ENCODE measurements at regions of chr13 and their contacts with region 1.

Region 1: DNA sequence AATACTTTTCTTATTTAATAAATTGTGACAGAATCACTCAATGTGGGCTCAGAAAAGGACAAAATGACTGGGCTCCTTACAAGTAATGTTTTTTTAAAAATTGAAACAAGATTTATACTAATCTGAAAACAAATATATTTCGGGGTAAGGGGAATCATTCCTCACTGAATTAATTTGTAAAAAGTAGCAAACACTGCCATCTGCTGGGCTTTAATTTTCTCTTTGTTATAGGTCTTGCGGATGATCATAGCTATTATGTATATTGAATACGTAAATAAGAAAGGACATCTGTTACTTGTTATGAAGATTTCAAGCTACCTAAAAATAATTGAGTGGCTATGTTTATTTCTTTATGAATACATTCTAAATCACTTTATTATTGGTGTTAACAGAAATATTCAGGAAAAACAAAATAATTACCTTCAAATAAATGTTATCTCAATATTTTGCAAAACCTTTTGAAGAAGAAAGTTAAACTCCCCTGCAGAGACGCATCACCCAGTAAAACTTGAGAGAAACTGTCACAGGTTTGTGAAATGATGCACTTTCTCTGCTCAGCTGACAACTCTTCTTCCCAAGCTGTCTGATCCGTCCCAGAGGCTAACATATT is 17.8 kb upstream of the ENOX1 start:
- DNase-seq: no peak
- H3K4me3 Mint-ChIP-seq: no peak overlapping the region
- H3K27ac Mint-ChIP-seq: no peak overlapping the region
- H3K4me1 Mint-ChIP-seq: peaks cover 13% of the 10 kb centered on the region
- H3K27me3 Mint-ChIP-seq: peaks cover 26% of the 10 kb centered on the region

Region 2: GRCh38 chr13:42594970-42595571 is 1209.5 kb before region 1 on chr13:
- CTCF ChIA-PET with region 1: interaction called, 4 read pairs
- POLR2A ChIA-PET with region 1: no interaction called
- intact Hi-C with region 1: loop called (anchors 5 kb)
- DNase-seq: peak; percentile 67
- H3K4me3 Mint-ChIP-seq: no peak overlapping the region
- H3K27ac Mint-ChIP-seq: no peak overlapping the region
- H3K4me1 Mint-ChIP-seq: peaks cover under 1% of the 10 kb centered on the region
- H3K27me3 Mint-ChIP-seq: no peaks in the 10 kb centered on the region

Region 3: GRCh38 chr13:43085545-43085944 is 719.0 kb before region 1 on chr13:
- CTCF ChIA-PET with region 1: interaction called, 14 read pairs
- POLR2A ChIA-PET with region 1: no interaction called
- intact Hi-C with region 1: no loop called
- DNase-seq: no peak
- H3K4me3 Mint-ChIP-seq: no peak overlapping the region
- H3K27ac Mint-ChIP-seq: no peak overlapping the region
- H3K4me1 Mint-ChIP-seq: peaks cover 15% of the 10 kb centered on the region
- H3K27me3 Mint-ChIP-seq: no peaks in the 10 kb centered on the region

Region 4: DNA sequence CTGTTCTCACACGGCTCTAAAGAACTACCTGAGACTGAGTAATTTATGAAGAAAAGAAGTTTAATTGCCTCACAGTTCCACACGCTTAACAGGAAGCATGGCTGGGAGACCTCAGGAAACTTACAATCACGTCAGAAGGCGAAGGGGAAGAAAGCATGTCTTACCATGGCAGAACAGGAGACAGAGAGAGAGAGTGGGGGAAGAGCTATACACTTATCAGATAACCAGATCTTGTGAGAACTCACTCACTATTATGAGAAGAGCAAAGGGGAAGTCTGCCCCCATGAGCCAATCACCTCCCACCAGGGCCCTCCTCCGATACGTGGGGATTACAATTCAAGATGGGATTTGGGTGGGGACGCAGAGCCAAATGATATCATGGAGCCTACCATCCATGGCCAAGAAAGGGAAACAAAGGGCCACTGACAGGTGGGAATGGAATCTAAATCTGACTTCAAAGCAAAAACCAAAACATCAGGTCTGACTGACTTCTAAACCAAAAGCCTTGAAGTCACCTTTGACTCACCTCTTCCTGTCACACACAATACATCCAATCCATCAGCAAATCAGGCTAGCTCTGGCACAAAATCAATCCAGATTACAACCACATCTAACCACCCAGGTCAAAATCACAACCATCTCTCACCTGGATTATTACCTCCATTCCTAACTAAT is 207.5 kb before region 1 on chr13:
- CTCF ChIA-PET with region 1: no interaction called
- POLR2A ChIA-PET with region 1: no interaction called
- intact Hi-C with region 1: loop called (anchors 10 kb)
- DNase-seq: peak; percentile 11
- H3K4me3 Mint-ChIP-seq: no peak overlapping the region
- H3K27ac Mint-ChIP-seq: no peak overlapping the region
- H3K4me1 Mint-ChIP-seq: peaks cover 13% of the 10 kb centered on the region
- H3K27me3 Mint-ChIP-seq: peaks cover 2% of the 10 kb centered on the region

Region 5: GRCh38 chr13:43878892-43879754 is 74.6 kb after region 1 on chr13 and contains the start of gene CCDC122:
- CTCF ChIA-PET with region 1: interaction called, 3 read pairs
- POLR2A ChIA-PET with region 1: no interaction called
- intact Hi-C with region 1: loop called (anchors 2 kb)
- DNase-seq: peak; percentile 87
- H3K4me3 Mint-ChIP-seq: peak within 1 kb of the TSS; percentile 85
- H3K27ac Mint-ChIP-seq: peak within 1 kb of the TSS; percentile 87
- H3K4me1 Mint-ChIP-seq: peaks cover 23% of the 10 kb centered on the region
- H3K27me3 Mint-ChIP-seq: peaks cover 2% of the 10 kb centered on the region
- total RNA-seq, gene CCDC122: 2.0 to 2.5 TPM

Region 6: DNA sequence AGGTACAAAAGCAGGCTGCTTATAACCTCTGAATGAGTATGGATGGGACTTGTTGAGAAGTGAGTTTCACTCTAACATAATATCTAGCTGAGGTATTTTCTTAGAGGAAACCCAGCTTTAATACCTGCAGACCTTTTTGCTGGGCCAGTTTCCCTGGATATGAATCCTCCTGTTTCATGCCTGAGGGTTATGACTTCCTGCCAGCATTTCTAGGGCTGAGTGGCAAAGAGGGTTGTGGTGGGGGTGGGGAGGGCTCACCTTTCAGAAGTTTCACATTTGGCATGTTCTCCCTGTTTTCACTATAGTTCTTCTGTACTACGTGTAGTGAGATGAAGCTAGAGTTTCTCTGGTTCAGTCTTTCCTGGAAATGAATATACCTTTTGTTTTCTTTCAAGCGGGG is 148.8 kb after region 1 on chr13:
- CTCF ChIA-PET with region 1: no interaction called
- POLR2A ChIA-PET with region 1: no interaction called
- intact Hi-C with region 1: no loop called
- DNase-seq: peak; percentile 12
- H3K4me3 Mint-ChIP-seq: no peak overlapping the region
- H3K27ac Mint-ChIP-seq: no peak overlapping the region
- H3K4me1 Mint-ChIP-seq: no peaks in the 10 kb centered on the region
- H3K27me3 Mint-ChIP-seq: peaks cover 11% of the 10 kb centered on the region